ENCODE measurements at regions of chr17 and their contacts with region 1.

Region 1: GRCh38 chr17:42212382-42212781 is 18.1 kb upstream of the GHDC start:
- DNase-seq: no peak
- ATAC-seq: no peak
- H3K4me3 ChIP-seq: no peak overlapping the region
- H3K27ac ChIP-seq: peak overlapping the region; percentile 48
- H3K4me1 ChIP-seq: peaks cover 3% of the 10 kb centered on the region; the same call in 1 of the 2 replicates
- H3K27me3 ChIP-seq: no peaks in the 10 kb centered on the region
- CTCF ChIP-seq: no peak

Region 2: GRCh38 chr17:42248351-42249179 is 36.2 kb after region 1 on chr17:
- CTCF ChIA-PET with region 1: no interaction called
- POLR2A ChIA-PET with region 1: interaction called, 10 read pairs
- in situ Hi-C with region 1: no loop called
- intact Hi-C with region 1: no loop called
- DNase-seq: no peak
- ATAC-seq: peak; percentile 66
- H3K4me3 ChIP-seq: peak overlapping the region; percentile 5 to 47; a peak in 3 of 4 replicates
- H3K27ac ChIP-seq: peak overlapping the region; percentile 100
- H3K4me1 ChIP-seq: peaks cover 82% of the 10 kb centered on the region
- H3K27me3 ChIP-seq: no peaks in the 10 kb centered on the region
- CTCF ChIP-seq: no peak

Region 3: GRCh38 chr17:42266918-42267778 is 54.8 kb after region 1 on chr17:
- CTCF ChIA-PET with region 1: no interaction called
- POLR2A ChIA-PET with region 1: no interaction called
- in situ Hi-C with region 1: no loop called
- intact Hi-C with region 1: no loop called
- DNase-seq: peak; percentile 90
- ATAC-seq: peak; percentile 92
- H3K4me3 ChIP-seq: no peak overlapping the region
- H3K27ac ChIP-seq: peak overlapping the region; percentile 94
- H3K4me1 ChIP-seq: peaks cover 65% of the 10 kb centered on the region
- H3K27me3 ChIP-seq: no peaks in the 10 kb centered on the region
- CTCF ChIP-seq: no peak